ENCODE measurements at regions of chr14 and their contacts with region 1.

Region 1: GRCh38 chr14:63632932-63633514 is 8.6 kb downstream of the WDR89 start:
- DNase-seq: no peak
- H3K4me3 ChIP-seq: no peak overlapping the region
- CTCF ChIP-seq: peak; percentile 35

Region 2: DNA sequence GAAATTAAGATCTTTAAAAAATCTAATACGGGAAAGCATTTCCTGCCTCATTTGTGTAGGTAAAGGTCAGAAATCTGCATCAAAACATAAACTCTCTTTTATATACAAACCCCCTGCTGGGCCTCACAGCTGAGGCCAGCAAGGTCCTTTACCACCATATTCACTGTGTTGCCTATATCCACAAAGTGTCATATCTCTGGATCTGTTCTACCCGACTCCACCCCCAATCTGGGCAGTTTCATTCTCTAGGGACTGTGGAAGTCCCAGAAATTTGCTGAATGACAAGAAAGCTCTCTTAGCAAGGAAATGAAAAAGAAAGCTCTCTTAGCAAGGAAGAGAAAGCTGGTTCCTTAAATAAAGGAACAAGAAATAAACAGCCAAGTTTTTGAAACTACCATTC is 889.5 kb before region 1 on chr14:
- CTCF ChIA-PET with region 1: no interaction called
- POLR2A ChIA-PET with region 1: no interaction called
- DNase-seq: no peak
- H3K4me3 ChIP-seq: no peak overlapping the region
- CTCF ChIP-seq: no peak

Region 3: DNA sequence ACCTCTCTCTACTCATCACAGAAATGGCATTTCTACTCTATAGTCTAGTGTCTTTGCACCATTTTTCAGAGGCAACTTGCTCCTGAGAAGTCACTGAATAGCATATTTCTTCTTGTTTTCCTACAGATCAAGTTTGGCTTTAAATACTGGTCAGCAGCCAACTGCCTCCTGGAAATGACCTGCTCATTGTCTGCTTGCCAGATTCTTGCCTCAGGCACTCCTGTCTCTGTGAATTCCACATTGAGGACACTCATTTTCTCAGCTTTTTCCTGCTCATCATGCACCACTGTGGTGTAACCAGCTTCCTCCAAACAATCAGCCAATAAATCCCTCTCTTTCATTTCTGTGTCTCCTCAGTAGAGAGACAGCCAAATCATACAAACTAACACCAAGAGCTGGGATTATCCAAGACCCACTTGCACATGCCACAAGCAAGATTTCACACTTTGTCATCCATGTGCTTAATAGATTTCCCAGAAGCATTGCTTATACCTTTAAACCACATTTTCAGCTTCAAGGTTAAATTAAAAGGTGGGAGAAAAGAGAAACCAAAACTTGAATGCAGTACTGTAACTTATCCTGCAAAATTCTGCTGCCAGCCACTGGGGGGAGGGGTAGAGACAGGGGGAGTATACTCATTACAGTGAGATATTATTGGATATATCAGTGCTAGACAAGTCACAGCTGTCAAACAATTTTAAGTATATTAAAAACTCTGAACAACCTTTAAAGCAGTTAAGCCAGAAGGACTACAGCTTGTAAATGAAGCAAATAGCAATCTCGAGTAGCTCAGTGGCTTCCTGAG is 194.9 kb before region 1 on chr14:
- CTCF ChIA-PET with region 1: no interaction called
- POLR2A ChIA-PET with region 1: no interaction called
- DNase-seq: peak; percentile 84
- H3K4me3 ChIP-seq: peak overlapping the region; percentile 38
- CTCF ChIP-seq: no peak

Region 4: GRCh38 chr14:63564318-63564717 is 68.7 kb before region 1 on chr14:
- CTCF ChIA-PET with region 1: no interaction called
- POLR2A ChIA-PET with region 1: no interaction called
- DNase-seq: no peak
- H3K4me3 ChIP-seq: no peak overlapping the region
- CTCF ChIP-seq: no peak

Region 5: DNA sequence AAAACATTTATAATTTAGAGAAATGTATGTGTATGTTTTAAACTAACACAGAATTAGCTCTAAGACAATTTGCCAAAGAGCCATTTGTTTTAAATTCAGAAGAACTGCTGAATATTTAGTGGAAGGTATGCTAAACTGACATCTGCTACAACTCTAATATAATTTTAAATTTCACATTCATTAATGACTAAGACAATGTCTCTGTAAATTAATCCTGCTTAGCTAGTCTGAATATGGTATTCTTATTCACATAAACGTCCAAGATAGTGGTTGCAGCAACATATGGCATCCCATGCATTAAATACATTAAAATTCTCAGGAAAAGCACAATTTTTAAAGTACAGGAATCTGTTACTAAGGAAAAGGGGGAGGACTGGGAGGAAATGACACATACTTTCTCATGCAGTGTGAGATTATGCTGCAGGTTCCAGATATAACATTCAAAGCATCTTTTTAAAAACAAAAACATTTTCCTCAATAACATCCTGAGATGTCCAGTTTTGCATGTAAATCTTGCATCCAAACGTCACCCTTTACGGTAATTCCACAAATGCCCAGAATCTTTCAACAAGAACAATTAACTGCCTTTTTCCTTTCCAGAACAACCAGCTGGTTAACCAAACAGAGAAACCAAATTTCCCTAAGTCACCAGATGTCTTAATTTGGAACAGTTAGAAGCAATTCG is 18.2 kb before region 1 on chr14:
- CTCF ChIA-PET with region 1: interaction called, 10 read pairs
- POLR2A ChIA-PET with region 1: no interaction called
- DNase-seq: peak; percentile 16
- H3K4me3 ChIP-seq: no peak overlapping the region
- CTCF ChIP-seq: no peak